ENCODE measurements at regions of chr16 and their contacts with region 1.

Region 1: GRCh38 chr16:47136101-47136820 is 7.5 kb downstream of the NETO2 start:
- DNase-seq: no peak
- H3K4me3 ChIP-seq: no peak overlapping the region
- H3K27ac ChIP-seq: no peak overlapping the region
- H3K4me1 ChIP-seq: peaks cover 0 to 24% (median 11%) of the 10 kb centered on the region in 4 donors
- H3K27me3 ChIP-seq: peaks cover 11% of the 10 kb centered on the region
- CTCF ChIP-seq: no peak
- EP300 ChIP-seq: no peak
- POLR2A ChIP-seq: no peak

Region 2: GRCh38 chr16:47037746-47038458 is 98.4 kb before region 1 on chr16:
- in situ Hi-C with region 1: loop called in 2 of 4 experiments (anchors 10 kb)
- intact Hi-C with region 1: no loop called
- DNase-seq: peak; percentile 92
- H3K4me3 ChIP-seq: peak overlapping the region; percentile 25 to 73 (median 52)
- H3K27ac ChIP-seq: peak overlapping the region; percentile 47 to 69 (median 60)
- H3K4me1 ChIP-seq: peaks cover 0 to 4% (median 2%) of the 10 kb centered on the region in 4 donors
- H3K27me3 ChIP-seq: peaks cover 7% of the 10 kb centered on the region
- CTCF ChIP-seq: peak; percentile 86 to 96 (median 95)
- EP300 ChIP-seq: no peak
- POLR2A ChIP-seq: no peak

Region 3: GRCh38 chr16:47045023-47045422 is 91.2 kb before region 1 on chr16:
- in situ Hi-C with region 1: loop called in 1 of 4 experiments (anchors 10 kb)
- intact Hi-C with region 1: no loop called
- DNase-seq: no peak
- H3K4me3 ChIP-seq: no peak overlapping the region
- H3K27ac ChIP-seq: no peak overlapping the region
- H3K4me1 ChIP-seq: no peaks in the 10 kb centered on the region
- H3K27me3 ChIP-seq: no peaks in the 10 kb centered on the region
- CTCF ChIP-seq: no peak
- EP300 ChIP-seq: no peak
- POLR2A ChIP-seq: no peak